Dendritic cell treated with granulocyte-macrophage colony-stimulating factor and Interleukin-4, amounts not matched to agents 40 ng/mL and 50 ng/mL, for 4 days (primary cell): ENCODE measurements at regions of chr1 and their contacts with region 1.

Region 1: DNA sequence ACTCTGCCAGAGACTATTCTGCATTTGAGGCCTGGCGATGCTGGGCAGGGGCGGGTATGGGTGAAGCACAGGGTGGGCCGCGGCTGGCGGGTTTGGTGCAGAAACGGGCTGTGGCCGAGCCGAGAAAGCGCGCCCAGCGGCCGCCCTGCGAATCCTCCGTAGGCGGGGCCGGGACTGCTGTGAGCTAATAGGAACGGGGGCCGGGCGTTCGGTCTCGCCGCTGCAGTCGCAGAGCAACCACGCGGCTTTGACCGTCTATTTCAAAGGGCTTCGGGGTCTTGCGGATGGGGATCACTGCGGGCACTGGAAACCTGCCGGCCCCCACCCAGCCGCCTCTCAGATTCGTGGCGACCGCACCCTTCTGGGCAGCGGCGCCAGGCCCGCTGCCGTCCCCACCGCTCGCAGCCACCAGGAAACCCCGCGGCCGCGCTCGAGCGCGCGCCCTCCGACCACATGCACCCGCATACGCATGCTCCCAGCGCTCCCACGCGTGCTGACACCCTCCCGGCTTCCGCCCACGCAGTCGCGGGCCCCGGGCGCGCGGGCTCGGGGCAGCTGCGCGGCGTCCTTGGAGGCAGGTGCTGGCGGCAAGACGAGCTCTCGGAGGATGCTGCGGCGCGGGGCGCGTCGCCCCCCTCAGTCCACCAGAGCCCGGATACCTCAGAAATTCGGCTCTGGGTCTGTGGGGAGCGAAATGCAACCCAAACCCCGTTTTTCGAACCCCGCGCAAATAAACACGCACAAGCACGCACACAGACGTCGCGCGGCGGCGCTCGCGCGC is 32.6 kb downstream of the DNTTIP2 start:
- H3K4me3 Mint-ChIP-seq: peak overlapping the region; percentile 97
- H3K27ac Mint-ChIP-seq: peak overlapping the region; percentile 94
- H3K4me1 Mint-ChIP-seq: peaks cover 36% of the 10 kb centered on the region
- H3K27me3 Mint-ChIP-seq: no peaks in the 10 kb centered on the region

Region 2: GRCh38 chr1:93304716-93305138 is 541.7 kb before region 1 on chr1:
- intact Hi-C with region 1: loop called (anchors 5 kb)
- H3K4me3 Mint-ChIP-seq: no peak overlapping the region
- H3K27ac Mint-ChIP-seq: no peak overlapping the region
- H3K4me1 Mint-ChIP-seq: no peaks in the 10 kb centered on the region
- H3K27me3 Mint-ChIP-seq: no peaks in the 10 kb centered on the region

Region 3: DNA sequence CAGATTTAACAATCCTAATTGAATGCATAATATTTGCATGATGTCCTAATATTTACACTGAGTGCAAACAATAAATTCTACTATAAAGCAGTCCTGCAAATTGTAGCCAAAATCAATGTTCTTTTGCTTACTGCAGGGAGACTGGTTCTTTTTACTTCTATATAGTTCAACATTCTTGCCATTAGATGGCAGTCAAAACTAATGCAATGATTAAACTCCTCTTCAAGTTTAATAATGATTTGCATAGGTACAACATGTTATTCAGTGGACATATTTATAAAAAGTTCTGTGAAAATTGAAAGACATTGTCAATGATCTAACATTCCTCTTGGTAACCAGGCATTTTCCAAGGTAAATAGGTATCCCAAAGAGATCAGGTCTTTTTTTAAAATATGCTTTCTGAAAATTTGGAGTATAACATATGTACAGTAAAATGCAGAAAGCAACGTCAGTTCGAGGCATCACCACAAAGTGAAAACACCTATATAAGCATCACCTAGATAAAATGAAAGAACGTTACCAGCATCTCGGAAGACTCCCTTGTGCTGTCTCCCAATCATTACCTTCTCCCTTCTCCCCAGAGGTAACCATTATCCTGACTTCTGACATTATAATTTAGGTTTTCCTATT is 408.3 kb before region 1 on chr1:
- intact Hi-C with region 1: loop called (anchors 2 kb)
- H3K4me3 Mint-ChIP-seq: no peak overlapping the region
- H3K27ac Mint-ChIP-seq: no peak overlapping the region
- H3K4me1 Mint-ChIP-seq: peaks cover 6% of the 10 kb centered on the region
- H3K27me3 Mint-ChIP-seq: peaks cover 10% of the 10 kb centered on the region

Region 4: DNA sequence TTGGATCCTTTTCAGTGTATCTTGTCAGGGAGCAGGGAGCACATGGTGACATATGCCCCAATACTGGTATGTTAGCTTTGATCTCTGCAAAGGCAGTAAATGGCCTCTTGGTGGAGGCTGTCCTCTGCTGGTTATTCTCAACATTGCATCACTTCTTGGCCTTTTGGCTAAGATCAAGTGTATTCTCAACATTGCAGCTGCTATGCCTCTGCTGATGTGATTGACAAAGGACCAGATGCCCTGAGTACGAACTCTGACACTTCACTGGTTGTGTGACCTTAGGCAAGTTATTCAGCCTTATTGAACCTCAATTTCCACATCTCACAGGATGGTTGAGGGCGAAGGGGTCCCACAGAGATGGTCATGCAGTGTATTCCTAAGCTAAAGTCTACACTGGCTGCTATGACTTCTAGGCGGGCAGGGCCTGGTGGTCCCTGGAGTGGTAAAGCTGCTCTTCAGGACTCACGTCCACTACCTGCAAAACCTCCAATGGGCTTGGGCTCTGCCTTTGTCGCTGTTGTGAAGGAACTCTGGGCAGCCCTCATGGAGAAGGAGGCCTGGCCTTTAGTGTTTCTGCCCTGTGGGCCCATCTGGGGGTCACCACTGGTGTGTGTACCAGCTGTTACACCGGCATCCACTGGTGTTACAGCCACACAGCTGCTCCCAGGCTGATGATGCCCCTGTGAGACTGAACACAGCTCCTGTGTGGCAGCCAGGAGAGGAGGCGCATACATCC is 32.2 kb before region 1 on chr1:
- intact Hi-C with region 1: loop called (anchors 5 kb)
- H3K4me3 Mint-ChIP-seq: no peak overlapping the region
- H3K27ac Mint-ChIP-seq: no peak overlapping the region
- H3K4me1 Mint-ChIP-seq: peaks cover 52% of the 10 kb centered on the region
- H3K27me3 Mint-ChIP-seq: no peaks in the 10 kb centered on the region

Region 5: GRCh38 chr1:93909146-93910050 is 63.0 kb after region 1 on chr1 and contains the start of gene GCLM:
- intact Hi-C with region 1: loop called (anchors 5 kb)
- H3K4me3 Mint-ChIP-seq: peak within 1 kb of the TSS; percentile 82
- H3K27ac Mint-ChIP-seq: peak within 1 kb of the TSS; percentile 78
- H3K4me1 Mint-ChIP-seq: peaks cover 28% of the 10 kb centered on the region
- H3K27me3 Mint-ChIP-seq: peaks cover 11% of the 10 kb centered on the region